Posterior cingulate gyrus (tissue), 11 donors: ENCODE measurements at regions of chr14 and their contacts with region 1.

Region 1: DNA sequence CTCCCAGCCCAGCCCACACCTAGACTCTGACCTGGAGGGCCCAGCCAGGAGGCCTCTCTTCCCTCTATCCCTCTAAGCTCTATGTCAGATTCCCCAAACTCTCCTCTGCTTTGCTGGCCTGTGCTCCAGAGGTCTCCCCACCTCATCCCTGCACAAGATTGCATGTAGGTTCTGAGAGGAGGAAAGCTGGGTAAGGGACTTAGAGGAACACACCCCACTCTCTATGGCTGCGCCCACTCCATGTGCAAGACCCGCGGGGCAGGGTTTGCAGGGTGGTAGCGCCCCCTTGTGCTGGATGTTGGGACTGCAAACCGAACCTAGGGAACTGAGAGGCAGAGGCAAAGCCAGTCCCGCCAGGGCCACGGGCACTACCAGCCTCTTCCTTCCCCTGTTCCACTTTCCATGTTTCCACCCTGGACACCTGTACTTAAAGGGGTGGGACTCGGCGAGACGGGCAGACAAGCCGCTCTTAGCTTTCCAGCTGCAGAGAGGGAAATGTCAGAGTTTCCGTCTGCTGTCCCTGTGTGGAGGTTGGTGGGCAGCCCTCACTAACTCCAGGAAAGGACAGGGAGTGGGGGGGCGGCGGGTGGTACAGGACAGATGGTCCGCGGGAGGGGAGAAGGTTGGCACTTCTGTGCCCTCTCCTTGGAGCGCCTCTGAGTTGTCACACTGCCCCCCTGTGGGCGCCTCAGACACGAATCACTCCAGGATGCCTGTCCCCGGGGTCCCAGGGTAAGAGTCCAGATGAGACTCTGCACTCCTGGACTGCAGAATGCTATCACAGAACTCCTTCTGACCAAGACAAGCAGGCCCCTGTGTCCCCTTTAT is 16.8 kb downstream of the MMP14 start:
- DNase-seq: peak; percentile 73 to 98 (median 88)

Region 2: GRCh38 chr14:22556990-22557623 is 296.0 kb before region 1 on chr14:
- intact Hi-C with region 1: loop called (anchors 5 kb)
- DNase-seq: peak; percentile 63 to 98 (median 81)

Region 3: GRCh38 chr14:22570132-22570949 is 282.8 kb before region 1 on chr14:
- intact Hi-C with region 1: loop called (anchors 1 kb)
- DNase-seq: peak in 6 of 10 donors; percentile 40 to 81 (median 66)

Region 4: GRCh38 chr14:22653012-22653621 is 200.0 kb before region 1 on chr14:
- intact Hi-C with region 1: loop called (anchors 10 kb)
- DNase-seq: peak in 5 of 10 donors; percentile 16 to 72 (median 29)

Region 5: GRCh38 chr14:22822571-22823098 is 30.5 kb before region 1 on chr14:
- intact Hi-C with region 1: loop called (anchors 1 kb)
- DNase-seq: peak in 9 of 10 donors; percentile 36 to 94 (median 68)

Region 6: GRCh38 chr14:23057757-23058653 is 204.9 kb after region 1 on chr14:
- intact Hi-C with region 1: no loop called
- DNase-seq: peak; percentile 77 to 98 (median 89)